Activated CD4-positive, alpha-beta T cell treated with anti-CD3 and anti-CD28 coated beads for 36 hours (primary cell): ENCODE measurements at regions of chr16 and their contacts with region 1.

Region 1: DNA sequence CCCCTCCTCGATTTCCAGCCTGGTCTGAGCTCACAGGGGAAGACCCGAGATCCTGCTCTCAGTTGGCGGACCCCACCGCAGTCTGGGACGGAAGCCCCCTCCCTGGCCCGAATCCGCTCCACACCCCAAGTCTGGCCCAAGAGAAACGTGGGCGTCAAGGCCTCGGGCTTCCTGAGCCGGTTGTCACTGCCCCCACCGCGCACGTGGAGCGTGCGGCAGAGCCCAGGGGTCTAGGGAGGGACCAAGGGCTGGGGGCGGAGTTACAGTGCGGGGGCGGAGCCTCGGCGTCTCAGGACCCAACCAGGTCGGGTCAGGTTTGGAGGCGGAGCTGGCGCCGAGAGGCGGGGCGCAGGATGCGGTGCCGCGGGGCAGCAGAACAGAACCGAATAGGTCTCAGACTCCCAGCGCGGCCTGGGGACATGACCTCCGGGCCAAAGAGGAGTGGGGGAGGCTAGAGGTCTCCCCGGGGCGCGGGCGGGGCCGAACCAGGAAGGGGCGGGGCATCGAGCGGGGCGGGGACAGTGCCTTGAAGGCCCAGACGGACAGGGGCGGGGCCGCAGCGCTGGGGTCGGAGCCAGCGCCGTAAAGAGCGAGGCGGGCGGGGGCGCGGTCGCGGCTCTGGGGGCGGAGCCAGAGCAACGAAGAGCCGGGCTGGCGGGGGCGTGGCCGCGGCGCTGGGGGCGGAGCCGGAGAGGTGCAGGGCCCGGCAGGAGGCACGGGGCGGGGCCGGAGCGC is 431 bp upstream of the ZFPM1 start:
- DNase-seq: peak; percentile 100
- ATAC-seq: peak; percentile 68
- H3K4me3 Mint-ChIP-seq: peak overlapping the region; percentile 74
- H3K27ac Mint-ChIP-seq: peak overlapping the region; percentile 78
- H3K4me1 Mint-ChIP-seq: peaks cover 24% of the 10 kb centered on the region
- H3K27me3 Mint-ChIP-seq: no peaks in the 10 kb centered on the region

Region 2: DNA sequence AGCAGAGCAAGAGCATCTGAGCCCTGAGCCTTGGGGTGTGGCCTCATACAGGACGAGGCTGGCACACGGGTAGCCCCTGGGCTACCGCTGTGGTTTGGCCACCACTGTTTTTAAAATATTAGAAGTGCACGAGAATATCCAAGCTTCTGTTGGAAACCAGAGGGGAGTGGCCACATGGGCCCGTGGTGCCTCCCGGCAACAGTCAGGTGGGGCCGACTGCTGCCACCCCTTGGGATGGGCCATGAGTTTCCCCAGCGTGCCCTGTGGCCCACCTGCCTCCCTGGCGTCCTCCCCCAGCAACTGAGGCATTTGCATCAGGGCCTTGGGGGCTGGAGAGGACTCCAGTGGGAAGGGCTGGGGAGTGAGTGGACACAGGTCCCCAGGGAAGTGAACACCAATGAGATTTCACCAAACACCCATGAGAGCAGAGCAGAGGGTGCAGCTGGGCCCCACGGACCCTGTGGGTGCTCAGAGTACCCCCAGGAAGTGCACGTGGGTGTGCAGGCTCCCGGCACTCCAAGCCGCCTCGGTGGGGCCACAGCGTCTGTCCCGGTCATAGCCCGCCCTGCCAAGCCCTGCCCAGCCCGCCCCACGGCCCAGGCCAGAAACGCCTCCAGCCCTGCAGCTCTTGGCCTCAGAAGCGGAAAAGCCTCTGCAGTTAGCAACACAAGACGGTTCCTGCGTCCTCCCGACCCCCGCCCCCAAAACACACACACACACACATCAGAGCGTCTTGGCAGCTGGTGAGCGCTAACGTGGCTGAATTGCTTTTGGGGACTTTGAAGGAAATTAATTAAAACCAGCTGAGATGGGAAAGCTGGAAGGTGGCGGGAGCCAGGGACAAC is 47.2 kb before region 1 on chr16:
- CTCF ChIA-PET with region 1: no interaction called
- POLR2A ChIA-PET with region 1: no interaction called
- intact Hi-C with region 1: no loop called
- DNase-seq: no peak
- ATAC-seq: no peak
- H3K4me3 Mint-ChIP-seq: no peak overlapping the region
- H3K27ac Mint-ChIP-seq: no peak overlapping the region
- H3K4me1 Mint-ChIP-seq: peaks cover 4% of the 10 kb centered on the region
- H3K27me3 Mint-ChIP-seq: no peaks in the 10 kb centered on the region

Region 3: GRCh38 chr16:88437373-88437964 is 15.2 kb before region 1 on chr16:
- CTCF ChIA-PET with region 1: interaction called, 12 read pairs
- POLR2A ChIA-PET with region 1: no interaction called
- intact Hi-C with region 1: no loop called
- DNase-seq: peak; percentile 83
- ATAC-seq: peak; percentile 81
- H3K4me3 Mint-ChIP-seq: no peak overlapping the region
- H3K27ac Mint-ChIP-seq: no peak overlapping the region
- H3K4me1 Mint-ChIP-seq: no peaks in the 10 kb centered on the region
- H3K27me3 Mint-ChIP-seq: no peaks in the 10 kb centered on the region

Region 4: DNA sequence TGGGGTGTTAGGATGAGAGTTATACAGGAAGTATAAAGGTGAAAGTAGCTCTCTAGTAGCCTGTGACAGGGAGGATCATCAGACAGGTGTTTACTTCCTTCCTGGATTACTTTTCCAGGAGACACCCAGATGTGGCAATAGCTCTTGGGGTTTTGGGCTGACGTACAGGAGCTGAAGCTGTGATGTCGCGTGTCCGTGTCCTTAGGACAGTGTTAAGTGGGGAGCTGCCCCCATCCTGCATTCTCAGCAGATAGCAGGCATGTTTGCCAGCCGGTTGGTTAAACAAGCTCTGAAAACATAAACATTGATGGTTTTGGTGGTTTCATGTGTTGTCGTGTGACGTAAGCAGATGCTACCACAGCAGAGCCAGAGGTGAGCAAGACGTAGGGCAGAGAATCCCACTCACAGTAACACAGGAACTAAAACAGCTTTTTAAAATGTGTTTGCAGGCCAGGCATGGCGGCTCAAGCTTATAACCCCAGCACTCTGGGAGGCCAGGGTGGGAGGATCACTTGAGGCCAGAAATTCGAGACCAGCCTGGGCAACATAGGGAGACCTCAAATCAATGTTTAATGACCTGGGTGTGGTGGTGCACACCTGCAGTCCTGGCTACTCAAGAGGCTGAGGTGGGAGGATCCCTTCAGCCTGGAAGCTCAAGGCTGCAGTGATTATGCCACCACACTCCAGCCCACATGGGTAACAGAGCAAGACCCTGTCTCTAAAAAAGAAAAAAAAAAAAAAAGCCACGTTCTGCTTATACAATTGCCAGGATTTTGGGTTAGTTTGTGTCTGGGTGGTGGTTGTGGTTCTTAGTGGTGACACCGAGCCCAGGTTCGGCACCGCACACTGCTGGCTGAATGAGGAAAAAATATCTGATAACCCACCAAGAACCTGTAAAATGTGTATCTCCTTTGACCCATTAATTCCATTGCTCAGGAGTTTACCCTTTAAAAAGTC is 167.5 kb after region 1 on chr16:
- CTCF ChIA-PET with region 1: no interaction called
- POLR2A ChIA-PET with region 1: no interaction called
- intact Hi-C with region 1: no loop called
- DNase-seq: peak; percentile 62
- ATAC-seq: peak; percentile 82
- H3K4me3 Mint-ChIP-seq: no peak overlapping the region
- H3K27ac Mint-ChIP-seq: peak overlapping the region; percentile 67
- H3K4me1 Mint-ChIP-seq: peaks cover 20% of the 10 kb centered on the region
- H3K27me3 Mint-ChIP-seq: no peaks in the 10 kb centered on the region

Region 5: DNA sequence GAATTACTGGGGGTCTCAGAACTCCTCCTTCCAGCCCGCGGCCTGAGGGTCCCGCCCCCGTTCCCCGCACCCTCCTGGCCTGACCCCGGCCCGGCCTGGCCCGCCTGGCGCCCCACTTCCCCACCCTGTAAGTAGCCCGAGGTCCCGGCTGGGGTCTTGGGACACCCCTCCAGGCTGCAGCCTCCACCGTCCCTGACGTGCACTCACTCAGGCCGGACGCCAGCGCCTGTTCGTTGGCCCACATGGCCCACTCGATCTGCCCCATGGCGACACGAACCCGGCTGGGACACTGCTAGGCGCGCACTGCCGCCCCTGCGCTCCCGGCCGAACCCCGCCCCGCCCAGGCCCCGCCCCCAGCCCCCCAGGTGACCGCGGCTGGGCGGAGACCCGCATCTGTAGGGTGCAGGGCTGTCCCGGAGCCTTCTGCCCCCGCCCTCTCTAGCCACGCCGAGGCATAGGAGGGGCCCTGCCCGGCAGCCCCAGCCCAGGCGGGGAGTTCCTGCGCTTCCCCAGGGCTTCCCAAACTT is 198.2 kb after region 1 on chr16 and contains the start of gene CYBA:
- CTCF ChIA-PET with region 1: no interaction called
- POLR2A ChIA-PET with region 1: no interaction called
- intact Hi-C with region 1: loop called (anchors 1 to 2 kb)
- DNase-seq: peak; percentile 92
- ATAC-seq: peak; percentile 87
- H3K4me3 Mint-ChIP-seq: peak within 1 kb of the TSS; percentile 85
- H3K27ac Mint-ChIP-seq: peak within 1 kb of the TSS; percentile 93
- H3K4me1 Mint-ChIP-seq: peaks cover 15% of the 10 kb centered on the region
- H3K27me3 Mint-ChIP-seq: no peaks in the 10 kb centered on the region
- total RNA-seq, gene CYBA: 155 to 200 TPM

Region 6: GRCh38 chr16:88785106-88785924 is 332.7 kb after region 1 on chr16 and contains the start of gene PIEZO1:
- CTCF ChIA-PET with region 1: no interaction called
- POLR2A ChIA-PET with region 1: no interaction called
- intact Hi-C with region 1: loop called (anchors 1 to 10 kb)
- DNase-seq: peak; percentile 85
- ATAC-seq: peak; percentile 5
- H3K4me3 Mint-ChIP-seq: peak within 1 kb of the TSS; percentile 66
- H3K27ac Mint-ChIP-seq: peak within 1 kb of the TSS; percentile 78
- H3K4me1 Mint-ChIP-seq: peaks cover 44% of the 10 kb centered on the region
- H3K27me3 Mint-ChIP-seq: no peaks in the 10 kb centered on the region
- total RNA-seq, gene PIEZO1: 105 to 126 TPM

Region 7: GRCh38 chr16:89171463-89172170 is 719.0 kb after region 1 on chr16 and contains the start of gene CDH15:
- CTCF ChIA-PET with region 1: no interaction called
- POLR2A ChIA-PET with region 1: no interaction called
- intact Hi-C with region 1: loop called in 1 of 2 experiments (anchors 1 kb)
- DNase-seq: peak; percentile 99
- ATAC-seq: peak; percentile 97
- H3K4me3 Mint-ChIP-seq: peak within 1 kb of the TSS; percentile 43
- H3K27ac Mint-ChIP-seq: peak within 1 kb of the TSS; percentile 38
- H3K4me1 Mint-ChIP-seq: peaks cover 7% of the 10 kb centered on the region
- H3K27me3 Mint-ChIP-seq: peaks cover 3% of the 10 kb centered on the region
- total RNA-seq, gene CDH15: not detected

Region 8: DNA sequence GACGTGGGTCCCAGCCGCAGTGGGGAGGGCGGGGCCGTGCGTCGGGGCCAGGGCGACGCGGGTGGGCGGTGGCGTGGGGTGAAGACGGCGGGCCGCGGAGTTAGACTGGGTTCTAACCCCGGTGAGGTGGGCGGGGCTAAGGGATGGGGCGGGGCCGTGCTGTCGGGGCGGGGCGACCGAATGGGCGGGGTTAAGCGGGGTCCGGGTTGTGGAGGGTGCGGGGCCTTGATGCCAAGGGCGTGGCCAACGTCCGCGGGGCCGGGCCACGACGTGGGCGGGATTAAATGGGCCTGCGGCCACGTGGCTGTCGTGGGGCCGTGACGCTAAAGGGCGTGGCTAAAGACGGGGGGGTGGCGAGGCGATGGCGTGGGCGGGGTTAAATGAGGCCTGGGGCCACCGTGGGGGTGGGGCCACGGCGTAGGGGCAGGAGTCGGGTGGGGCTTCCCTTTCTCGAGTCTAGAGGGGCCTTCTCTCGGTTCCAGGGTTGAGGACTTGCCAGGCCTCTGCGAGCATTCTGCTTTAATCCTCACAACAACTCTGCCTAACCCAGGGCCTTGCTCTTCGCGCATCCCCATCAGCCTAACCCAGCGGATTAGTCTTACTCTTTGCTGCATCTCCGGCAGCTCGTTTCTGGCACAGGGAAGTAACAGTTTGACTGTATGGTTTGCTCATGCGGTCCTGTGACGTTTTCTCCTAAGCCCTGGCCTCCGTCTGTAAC is 1421.5 kb after region 1 on chr16:
- CTCF ChIA-PET with region 1: no interaction called
- POLR2A ChIA-PET with region 1: no interaction called
- intact Hi-C with region 1: loop called in 1 of 2 experiments (anchors 5 kb)
- DNase-seq: peak; percentile 99
- ATAC-seq: peak; percentile 78
- H3K4me3 Mint-ChIP-seq: peak overlapping the region; percentile 87
- H3K27ac Mint-ChIP-seq: peak overlapping the region; percentile 95
- H3K4me1 Mint-ChIP-seq: peaks cover 14% of the 10 kb centered on the region
- H3K27me3 Mint-ChIP-seq: no peaks in the 10 kb centered on the region